CD4-positive, alpha-beta memory T cell (primary cell): ENCODE measurements at regions of chr4 and their contacts with region 1.

Region 1: DNA sequence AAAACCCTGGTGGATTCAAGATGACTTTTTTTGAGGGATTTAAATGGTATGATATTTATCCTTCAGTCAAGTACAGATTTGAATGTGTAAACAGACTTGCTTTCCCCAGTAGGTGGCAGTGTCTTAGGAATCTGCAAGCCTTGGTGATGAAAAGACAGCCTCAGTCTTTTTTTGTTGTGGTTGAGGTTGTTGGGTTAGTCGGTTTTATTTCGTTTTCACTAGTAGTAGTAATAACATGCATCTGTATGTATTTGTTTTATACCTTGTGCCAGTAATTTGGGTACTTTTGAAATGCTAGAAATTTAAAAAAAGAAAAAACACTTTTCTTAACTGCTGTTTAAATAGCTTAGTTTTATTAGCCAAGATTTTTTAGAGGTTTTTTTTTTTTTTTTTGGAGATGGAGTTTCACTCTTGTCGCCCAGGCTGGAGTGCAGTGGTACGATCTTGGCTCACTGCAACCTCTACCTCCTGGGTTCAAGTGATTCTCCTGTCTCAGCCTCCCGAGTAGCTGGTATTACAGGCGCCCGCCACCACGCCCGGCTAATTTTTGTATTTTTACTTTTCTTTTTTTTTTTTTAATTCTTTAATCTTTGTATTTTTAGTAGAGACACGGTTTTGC is 39.2 kb downstream of the COPS4 start:
- DNase-seq: peak; percentile 84 to 89 (median 85)
- H3K4me3 ChIP-seq: no peak overlapping the region
- H3K4me3 Mint-ChIP-seq: peak overlapping the region; percentile 59 to 83 (median 74)
- H3K27ac ChIP-seq: no peak overlapping the region
- H3K27ac Mint-ChIP-seq: peak overlapping the region; percentile 43 to 85 (median 63)
- H3K4me1 ChIP-seq: no peaks in the 10 kb centered on the region
- H3K4me1 Mint-ChIP-seq: peaks cover 4 to 14% (median 5%) of the 10 kb centered on the region in 4 donors
- H3K27me3 ChIP-seq: no peaks in the 10 kb centered on the region
- H3K27me3 Mint-ChIP-seq: no peaks in the 10 kb centered on the region

Region 2: GRCh38 chr4:82462415-82462831 is 611.8 kb before region 1 on chr4:
- CTCF ChIA-PET with region 1: no interaction called
- POLR2A ChIA-PET with region 1: no interaction called
- intact Hi-C with region 1: loop called (anchors 10 kb)
- DNase-seq: peak; percentile 74 to 83 (median 77)
- H3K4me3 ChIP-seq: no peak overlapping the region
- H3K4me3 Mint-ChIP-seq: no peak overlapping the region
- H3K27ac ChIP-seq: no peak overlapping the region
- H3K27ac Mint-ChIP-seq: peak overlapping the region in 5 of 7 donors; percentile 29 to 55 (median 45)
- H3K4me1 ChIP-seq: no peaks in the 10 kb centered on the region
- H3K4me1 Mint-ChIP-seq: peaks cover 0 to 5% (median 2%) of the 10 kb centered on the region in 4 donors
- H3K27me3 ChIP-seq: no peaks in the 10 kb centered on the region
- H3K27me3 Mint-ChIP-seq: no peaks in the 10 kb centered on the region

Region 3: DNA sequence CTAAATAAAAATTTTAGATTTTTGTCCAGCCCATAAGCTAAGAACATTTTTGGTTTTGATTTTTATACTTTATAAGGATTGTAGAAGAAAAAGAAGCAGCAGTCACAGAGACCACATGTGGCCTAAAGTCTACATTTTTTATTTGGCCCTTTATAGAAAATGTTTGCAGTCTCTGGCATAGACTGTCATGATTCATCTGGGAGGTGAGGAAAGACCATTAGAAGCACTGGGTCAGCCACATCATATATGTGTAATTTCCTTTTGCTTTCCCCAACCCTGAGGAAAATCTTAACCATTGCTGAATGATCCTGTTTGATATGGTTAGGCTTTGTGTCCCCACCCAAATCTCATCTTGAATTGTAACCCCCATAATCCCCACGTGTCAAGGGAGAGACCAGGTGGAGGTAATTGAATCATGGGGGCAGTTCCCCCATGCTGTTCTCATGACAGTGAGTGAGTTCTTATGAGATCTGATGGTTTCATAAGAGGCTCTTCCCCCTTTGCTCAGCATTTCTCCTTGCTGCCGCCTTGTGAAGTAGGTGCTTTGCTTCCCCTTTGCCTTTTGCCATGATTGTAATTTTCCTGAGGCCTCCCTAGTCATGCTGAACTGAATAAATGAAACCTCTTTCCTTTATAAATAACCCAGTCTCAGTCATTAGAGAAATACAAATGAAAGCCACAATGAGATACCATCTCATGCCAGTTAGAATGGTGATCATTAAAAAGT is 51.3 kb before region 1 on chr4:
- CTCF ChIA-PET with region 1: no interaction called
- POLR2A ChIA-PET with region 1: no interaction called
- intact Hi-C with region 1: no loop called
- DNase-seq: no peak
- H3K4me3 ChIP-seq: no peak overlapping the region
- H3K4me3 Mint-ChIP-seq: no peak overlapping the region
- H3K27ac ChIP-seq: no peak overlapping the region
- H3K27ac Mint-ChIP-seq: no peak overlapping the region
- H3K4me1 ChIP-seq: no peaks in the 10 kb centered on the region
- H3K4me1 Mint-ChIP-seq: no peaks in the 10 kb centered on the region
- H3K27me3 ChIP-seq: no peaks in the 10 kb centered on the region
- H3K27me3 Mint-ChIP-seq: peaks cover 2 to 9% of the 10 kb centered on the region in 2 donors

Region 4: DNA sequence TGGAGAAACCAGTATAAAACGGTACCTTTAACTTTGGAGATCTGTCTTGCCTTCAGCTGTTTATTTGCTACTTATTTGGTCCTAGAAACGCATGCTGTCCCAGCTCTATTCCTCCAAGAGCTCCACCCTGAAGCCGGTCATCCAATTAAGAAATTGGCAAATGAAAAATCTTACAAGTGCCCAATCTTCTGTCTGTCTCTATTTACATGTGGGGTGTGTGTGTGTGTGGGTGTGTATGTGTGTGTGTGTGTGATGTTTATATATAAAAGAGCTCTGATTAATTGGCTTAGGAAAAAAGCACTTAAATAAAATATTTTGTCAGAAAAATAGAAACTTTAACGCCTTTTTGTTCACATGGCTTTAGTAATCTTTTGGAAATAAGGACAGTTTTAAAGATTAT is 22.8 kb after region 1 on chr4:
- CTCF ChIA-PET with region 1: interaction called, 11 read pairs
- POLR2A ChIA-PET with region 1: no interaction called
- intact Hi-C with region 1: no loop called
- DNase-seq: no peak
- H3K4me3 ChIP-seq: no peak overlapping the region
- H3K4me3 Mint-ChIP-seq: peak overlapping the region in 3 of 8 donors; percentile 22 to 37 (median 31)
- H3K27ac ChIP-seq: no peak overlapping the region
- H3K27ac Mint-ChIP-seq: peak overlapping the region in 5 of 7 donors; percentile 14 to 78 (median 44)
- H3K4me1 ChIP-seq: peaks cover 36% of the 10 kb centered on the region
- H3K4me1 Mint-ChIP-seq: peaks cover 27 to 69% (median 43%) of the 10 kb centered on the region in 4 donors
- H3K27me3 ChIP-seq: no peaks in the 10 kb centered on the region
- H3K27me3 Mint-ChIP-seq: no peaks in the 10 kb centered on the region

Region 5: GRCh38 chr4:83212041-83212851 is 138.1 kb after region 1 on chr4:
- CTCF ChIA-PET with region 1: interaction called, 16 read pairs
- POLR2A ChIA-PET with region 1: interaction called, 7 read pairs
- intact Hi-C with region 1: no loop called
- DNase-seq: peak; percentile 84 to 93 (median 90)
- H3K4me3 ChIP-seq: peak overlapping the region in 1 of 2 donors; percentile 22
- H3K4me3 Mint-ChIP-seq: peak overlapping the region; percentile 50 to 88 (median 74)
- H3K27ac ChIP-seq: peak overlapping the region; percentile 45
- H3K27ac Mint-ChIP-seq: peak overlapping the region; percentile 45 to 99 (median 96)
- H3K4me1 ChIP-seq: peaks cover 80% of the 10 kb centered on the region
- H3K4me1 Mint-ChIP-seq: peaks cover 57 to 80% (median 68%) of the 10 kb centered on the region in 4 donors
- H3K27me3 ChIP-seq: no peaks in the 10 kb centered on the region
- H3K27me3 Mint-ChIP-seq: no peaks in the 10 kb centered on the region

Region 6: DNA sequence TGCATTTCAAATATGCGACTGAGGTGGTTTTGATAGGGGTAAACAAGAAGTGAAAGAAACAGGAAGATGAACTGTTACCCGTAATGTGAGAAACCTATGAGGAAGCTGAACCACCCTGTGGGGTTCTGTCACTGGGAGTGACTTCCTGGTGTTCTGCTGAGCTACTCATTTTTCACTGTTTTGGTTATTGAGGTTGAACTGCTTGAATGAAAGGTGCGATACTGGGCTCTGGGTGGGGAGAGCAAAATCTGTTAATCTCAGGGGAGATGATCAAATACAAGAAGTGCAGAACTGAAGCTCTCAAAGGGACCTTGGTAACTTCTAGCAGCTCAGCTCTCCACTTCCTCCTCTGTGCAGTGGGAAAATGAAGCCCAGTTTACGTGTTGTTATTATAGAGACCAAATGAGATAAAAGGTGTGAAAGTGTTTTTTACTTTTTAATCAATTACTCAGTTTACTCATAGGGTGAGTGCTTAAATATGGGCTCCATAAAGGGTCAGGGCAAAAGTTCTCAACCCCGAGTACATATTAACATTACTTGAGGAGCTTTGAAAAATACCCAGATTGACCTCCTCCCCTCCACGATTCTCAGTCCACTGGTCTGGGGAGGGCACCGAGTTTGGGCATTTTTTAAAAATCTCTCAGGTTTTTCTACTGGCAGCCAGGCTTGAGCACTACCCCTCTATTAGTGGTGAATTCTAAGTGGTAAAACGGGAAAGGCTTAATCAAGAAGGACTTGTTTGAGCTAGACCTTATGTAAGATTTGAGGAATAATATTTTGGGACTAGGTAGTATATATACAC is 143.7 kb after region 1 on chr4:
- CTCF ChIA-PET with region 1: interaction called, 16 read pairs
- POLR2A ChIA-PET with region 1: interaction called, 7 read pairs
- intact Hi-C with region 1: no loop called
- DNase-seq: peak; percentile 82 to 91 (median 86)
- H3K4me3 ChIP-seq: peak overlapping the region in 1 of 2 donors; percentile 9
- H3K4me3 Mint-ChIP-seq: peak overlapping the region; percentile 55 to 77 (median 70)
- H3K27ac ChIP-seq: peak overlapping the region; percentile 64
- H3K27ac Mint-ChIP-seq: peak overlapping the region; percentile 77 to 94 (median 91)
- H3K4me1 ChIP-seq: peaks cover 85% of the 10 kb centered on the region
- H3K4me1 Mint-ChIP-seq: peaks cover 58 to 85% (median 71%) of the 10 kb centered on the region in 4 donors
- H3K27me3 ChIP-seq: no peaks in the 10 kb centered on the region
- H3K27me3 Mint-ChIP-seq: no peaks in the 10 kb centered on the region

Region 7: DNA sequence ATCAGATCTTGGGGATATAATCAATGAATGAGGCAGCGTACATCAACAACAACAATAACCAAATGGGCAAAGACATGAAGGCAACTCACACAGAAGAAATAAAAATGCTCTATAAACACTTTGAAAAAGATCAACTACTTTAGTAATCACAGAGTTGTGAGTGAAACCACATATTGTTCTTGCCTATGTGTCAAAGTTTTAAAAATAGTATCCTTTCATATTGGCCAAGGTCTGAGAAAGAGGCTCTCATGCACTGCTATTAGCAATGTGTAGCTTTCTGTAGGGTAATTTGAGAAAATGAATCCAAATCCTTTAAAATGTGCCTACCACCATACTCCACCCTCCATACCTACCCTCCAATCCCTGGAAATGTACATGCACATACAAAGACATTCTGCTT is 185.4 kb after region 1 on chr4:
- CTCF ChIA-PET with region 1: interaction called, 123 read pairs
- POLR2A ChIA-PET with region 1: interaction called, 5 read pairs
- intact Hi-C with region 1: loop called (anchors 1 kb)
- DNase-seq: no peak
- H3K4me3 ChIP-seq: no peak overlapping the region
- H3K4me3 Mint-ChIP-seq: no peak overlapping the region
- H3K27ac ChIP-seq: no peak overlapping the region
- H3K27ac Mint-ChIP-seq: no peak overlapping the region
- H3K4me1 ChIP-seq: peaks cover 6% of the 10 kb centered on the region
- H3K4me1 Mint-ChIP-seq: peaks cover 0 to 5% (median 3%) of the 10 kb centered on the region in 4 donors
- H3K27me3 ChIP-seq: no peaks in the 10 kb centered on the region
- H3K27me3 Mint-ChIP-seq: no peaks in the 10 kb centered on the region

Region 8: DNA sequence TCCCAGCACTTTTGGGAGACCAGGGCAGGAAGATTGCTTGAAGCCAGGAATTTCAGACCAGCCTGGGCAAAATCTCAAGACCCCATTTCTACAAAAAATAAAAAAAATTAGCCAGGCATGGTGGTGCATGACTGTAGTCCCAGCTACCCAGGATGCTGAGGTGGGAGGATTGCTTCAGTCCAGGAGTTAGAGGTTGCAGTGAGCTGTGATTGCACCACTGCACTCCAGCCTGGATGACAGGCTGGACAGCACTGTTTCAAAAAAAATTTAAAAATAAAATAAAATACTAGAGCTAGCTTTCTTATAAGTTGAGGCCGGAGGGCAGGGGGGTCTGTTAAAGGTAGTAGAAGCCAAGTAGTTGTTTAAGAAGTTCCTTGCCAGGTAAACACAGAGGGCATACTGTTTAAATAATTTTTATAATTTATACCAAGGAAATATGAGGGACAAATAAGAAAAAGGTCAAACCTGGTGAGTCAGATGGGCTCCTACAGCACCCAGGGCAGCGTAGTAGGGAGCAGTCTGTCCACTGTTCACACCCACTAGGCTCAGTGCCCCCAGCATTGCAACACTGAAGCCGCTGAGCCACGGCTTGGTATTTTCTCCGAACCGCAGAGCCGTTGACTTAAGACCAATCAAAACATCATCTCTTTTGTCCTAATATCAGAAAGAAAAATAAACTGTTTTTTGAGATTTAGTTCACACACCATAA is 193.1 kb after region 1 on chr4:
- CTCF ChIA-PET with region 1: interaction called, 68 read pairs
- POLR2A ChIA-PET with region 1: no interaction called
- intact Hi-C with region 1: no loop called
- DNase-seq: no peak
- H3K4me3 ChIP-seq: no peak overlapping the region
- H3K4me3 Mint-ChIP-seq: no peak overlapping the region
- H3K27ac ChIP-seq: no peak overlapping the region
- H3K27ac Mint-ChIP-seq: no peak overlapping the region
- H3K4me1 ChIP-seq: peaks cover 5% of the 10 kb centered on the region
- H3K4me1 Mint-ChIP-seq: peaks cover 0 to 16% (median 3%) of the 10 kb centered on the region in 4 donors
- H3K27me3 ChIP-seq: no peaks in the 10 kb centered on the region
- H3K27me3 Mint-ChIP-seq: no peaks in the 10 kb centered on the region